Left colon (tissue), 2 donors: ENCODE measurements at regions of chr15 and their contacts with region 1.

Region 1: GRCh38 chr15:65384895-65385858 is 7.4 kb upstream of the IGDCC3 start:
- DNase-seq: peak; percentile 74 to 89
- ATAC-seq: peak; percentile 96

Region 2: GRCh38 chr15:65318870-65319356 is 66.3 kb before region 1 on chr15:
- intact Hi-C with region 1: loop called (anchors 2 to 5 kb)
- DNase-seq: peak; percentile 58 to 75
- ATAC-seq: peak; percentile 98